Transverse colon (tissue), 4 donors: ENCODE measurements at regions of chr1 and their contacts with region 1.

Region 1: DNA sequence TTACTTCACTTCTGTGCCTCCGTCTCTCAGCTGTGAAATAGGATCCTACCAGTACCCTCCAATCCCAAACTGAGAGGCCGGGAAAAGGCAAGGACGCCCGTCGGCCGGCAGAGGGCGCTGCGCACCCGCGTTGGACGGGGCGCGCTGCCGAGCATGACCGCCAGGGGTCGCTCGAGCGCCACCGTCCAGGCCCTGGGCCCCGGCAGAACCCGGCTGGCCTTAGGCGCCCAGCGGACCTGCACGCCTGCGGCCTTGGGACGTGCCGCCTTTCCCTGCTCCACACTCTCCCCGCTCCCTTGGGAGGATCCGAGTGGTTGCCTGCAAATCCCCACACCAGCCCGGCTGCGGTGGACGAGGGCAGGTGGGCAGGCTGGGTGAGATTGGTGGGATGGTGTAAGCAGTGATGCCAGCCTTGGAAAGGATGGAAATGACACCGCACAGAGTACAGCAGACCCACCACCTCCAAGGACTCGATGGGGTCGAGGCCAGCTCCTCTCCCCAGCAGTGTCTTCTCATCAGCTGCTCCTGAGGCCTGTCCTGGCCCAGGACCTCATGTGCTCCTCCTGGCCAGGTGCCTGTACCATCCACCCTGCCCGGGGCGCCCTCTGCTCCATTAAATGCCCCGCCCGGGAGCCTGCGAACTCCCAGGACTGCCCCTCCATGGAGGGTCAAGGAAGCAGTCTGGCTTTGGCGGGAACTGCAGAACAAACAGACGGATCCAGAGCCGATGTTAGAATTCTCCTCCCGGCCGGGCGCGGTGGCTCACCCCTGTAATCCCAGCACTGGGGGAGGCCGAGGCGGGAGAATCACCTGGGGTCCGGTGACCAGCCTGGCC is 47.4 kb upstream of the LBR start:
- DNase-seq: peak; percentile 66
- H3K4me3 ChIP-seq: no peak overlapping the region
- H3K27ac ChIP-seq: peak overlapping the region in 2 of 4 donors; percentile 45 to 59
- H3K4me1 ChIP-seq: peaks cover 7 to 22% (median 12%) of the 10 kb centered on the region in 4 donors
- H3K27me3 ChIP-seq: no peaks in the 10 kb centered on the region
- CTCF ChIP-seq: peak; percentile 100
- EP300 ChIP-seq: no peak
- POLR2A ChIP-seq: no peak

Region 2: GRCh38 chr1:225772323-225772768 is 297.1 kb after region 1 on chr1:
- in situ Hi-C with region 1: loop called (anchors 5 to 25 kb)
- intact Hi-C with region 1: loop called (anchors 2 kb)
- DNase-seq: peak; percentile 89
- H3K4me3 ChIP-seq: no peak overlapping the region
- H3K27ac ChIP-seq: peak overlapping the region; percentile 40 to 75 (median 55)
- H3K4me1 ChIP-seq: peaks cover 14 to 38% (median 25%) of the 10 kb centered on the region in 4 donors
- H3K27me3 ChIP-seq: no peaks in the 10 kb centered on the region
- CTCF ChIP-seq: peak; percentile 74 to 92 (median 78)
- EP300 ChIP-seq: no peak
- POLR2A ChIP-seq: no peak

Region 3: GRCh38 chr1:225911191-225912130 is 436.3 kb after region 1 on chr1:
- in situ Hi-C with region 1: loop called in 1 of 4 experiments (anchors 25 kb)
- intact Hi-C with region 1: loop called (anchors 1 kb)
- DNase-seq: peak; percentile 73
- H3K4me3 ChIP-seq: peak overlapping the region in 2 of 4 donors; percentile 6 to 23
- H3K27ac ChIP-seq: peak overlapping the region in 2 of 4 donors; percentile 33 to 37
- H3K4me1 ChIP-seq: peaks cover 0 to 18% (median 13%) of the 10 kb centered on the region in 4 donors
- H3K27me3 ChIP-seq: no peaks in the 10 kb centered on the region
- CTCF ChIP-seq: peak; percentile 93 to 97 (median 97)
- EP300 ChIP-seq: no peak
- POLR2A ChIP-seq: no peak

Region 4: GRCh38 chr1:225977937-225978748 is 502.9 kb after region 1 on chr1:
- in situ Hi-C with region 1: loop called (anchors 5 to 10 kb)
- intact Hi-C with region 1: loop called (anchors 5 kb)
- DNase-seq: no peak
- H3K4me3 ChIP-seq: no peak overlapping the region
- H3K27ac ChIP-seq: no peak overlapping the region
- H3K4me1 ChIP-seq: peaks cover 0 to 22% (median 15%) of the 10 kb centered on the region in 4 donors
- H3K27me3 ChIP-seq: no peaks in the 10 kb centered on the region
- CTCF ChIP-seq: no peak
- EP300 ChIP-seq: no peak
- POLR2A ChIP-seq: no peak